Activated naive CD4-positive, alpha-beta T cell treated with anti-CD3 and anti-CD28 coated beads for 36 hours (primary cell): ENCODE measurements at regions of chr22 and their contacts with region 1.

Region 1: GRCh38 chr22:31635638-31636306 is 26.2 kb downstream of the PISD start:
- DNase-seq: no peak
- H3K4me3 Mint-ChIP-seq: no peak overlapping the region
- H3K27ac Mint-ChIP-seq: peak overlapping the region; percentile 32
- H3K4me1 Mint-ChIP-seq: peaks cover 50% of the 10 kb centered on the region
- H3K27me3 Mint-ChIP-seq: no peaks in the 10 kb centered on the region

Region 2: GRCh38 chr22:31561238-31561887 is 74.4 kb before region 1 on chr22:
- CTCF ChIA-PET with region 1: interaction called, 14 read pairs
- intact Hi-C with region 1: loop called (anchors 1 kb)
- DNase-seq: peak; percentile 83
- H3K4me3 Mint-ChIP-seq: no peak overlapping the region
- H3K27ac Mint-ChIP-seq: peak overlapping the region; percentile 20
- H3K4me1 Mint-ChIP-seq: no peaks in the 10 kb centered on the region
- H3K27me3 Mint-ChIP-seq: no peaks in the 10 kb centered on the region